ENCODE measurements at regions of chr13 and their contacts with region 1.

Region 1: DNA sequence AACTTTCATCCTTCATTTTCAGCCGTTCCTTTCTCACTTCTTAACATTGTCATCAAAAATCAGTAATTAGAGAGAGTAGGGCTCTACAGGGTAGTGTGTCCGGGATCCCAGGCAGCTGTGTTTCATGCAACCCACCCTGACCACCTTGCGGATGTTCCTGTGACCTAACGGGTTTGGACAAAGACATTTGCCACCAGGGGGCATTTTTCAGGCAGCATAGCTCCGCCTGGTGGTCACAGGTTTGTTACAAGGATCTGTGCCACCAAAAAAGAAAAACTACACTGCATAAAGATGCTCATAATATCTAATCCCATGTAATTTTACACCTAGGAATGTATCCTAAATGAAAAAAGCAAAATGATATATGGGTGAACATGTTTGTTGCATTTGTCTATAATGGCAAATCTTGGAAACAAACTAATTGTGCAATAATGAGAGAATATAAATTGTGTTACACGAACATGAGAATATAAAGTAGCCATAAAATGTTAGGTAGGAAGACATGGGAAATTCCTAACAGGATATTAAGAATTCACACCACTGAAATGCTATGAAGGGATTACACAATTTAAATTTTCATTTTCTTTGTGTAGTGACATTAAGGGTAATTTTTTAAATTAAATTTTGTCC is 123.0 kb downstream of the SLC7A1 start:
- DNase-seq: peak; percentile 68
- ATAC-seq: peak; percentile 76
- H3K4me3 Mint-ChIP-seq: no peak overlapping the region
- H3K27ac Mint-ChIP-seq: no peak overlapping the region
- H3K4me1 Mint-ChIP-seq: no peaks in the 10 kb centered on the region
- H3K27me3 Mint-ChIP-seq: no peaks in the 10 kb centered on the region; the same call in 1 of the 2 replicates
- CTCF ChIP-seq: peak; percentile 81

Region 2: GRCh38 chr13:29484236-29484635 is 11.8 kb after region 1 on chr13:
- CTCF ChIA-PET with region 1: interaction called, 16 read pairs
- POLR2A ChIA-PET with region 1: no interaction called
- DNase-seq: no peak
- ATAC-seq: peak; percentile 49
- H3K4me3 Mint-ChIP-seq: no peak overlapping the region
- H3K27ac Mint-ChIP-seq: no peak overlapping the region
- H3K4me1 Mint-ChIP-seq: peaks cover 44% of the 10 kb centered on the region
- H3K27me3 Mint-ChIP-seq: no peaks in the 10 kb centered on the region
- CTCF ChIP-seq: no peak

Region 3: GRCh38 chr13:29522044-29522685 is 49.7 kb after region 1 on chr13:
- CTCF ChIA-PET with region 1: no interaction called
- POLR2A ChIA-PET with region 1: no interaction called
- DNase-seq: no peak
- ATAC-seq: no peak
- H3K4me3 Mint-ChIP-seq: no peak overlapping the region
- H3K27ac Mint-ChIP-seq: 0 out of 2 replicates have a peak overlapping the region, but pooled peaks have one; percentile 37
- H3K4me1 Mint-ChIP-seq: peaks cover 5% of the 10 kb centered on the region; the same call in 1 of the 2 replicates
- H3K27me3 Mint-ChIP-seq: no peaks in the 10 kb centered on the region
- CTCF ChIP-seq: no peak

Region 4: GRCh38 chr13:29625017-29625416 is 152.6 kb after region 1 on chr13:
- CTCF ChIA-PET with region 1: no interaction called
- POLR2A ChIA-PET with region 1: no interaction called
- DNase-seq: no peak
- ATAC-seq: no peak
- H3K4me3 Mint-ChIP-seq: no peak overlapping the region
- H3K27ac Mint-ChIP-seq: no peak overlapping the region
- H3K4me1 Mint-ChIP-seq: no peaks in the 10 kb centered on the region
- H3K27me3 Mint-ChIP-seq: no peaks in the 10 kb centered on the region
- CTCF ChIP-seq: no peak